Caco-2 (cell line): ENCODE measurements at regions of chr2 and their contacts with region 1.

Region 1: DNA sequence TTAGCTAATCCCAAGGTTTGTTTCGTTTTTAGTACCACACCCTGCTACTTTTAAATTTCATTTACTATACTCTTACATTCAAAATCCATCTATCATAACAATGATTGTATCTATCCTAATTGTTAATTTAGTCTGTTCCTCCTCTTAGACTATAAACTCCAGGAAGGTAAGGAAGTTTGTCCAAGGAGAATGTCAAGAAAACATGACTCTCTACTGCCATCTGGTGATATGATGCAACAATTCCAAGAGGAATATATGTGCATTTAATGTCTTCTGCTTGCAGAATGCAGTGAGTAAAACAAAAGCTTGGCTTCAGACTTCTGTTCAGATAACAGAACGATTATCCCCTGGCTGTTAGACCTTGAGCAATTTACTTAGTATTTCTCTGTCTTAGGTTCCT is 1267.1 kb downstream of the LRP1B start:
- DNase-seq: peak in 1 of 2 experiments; percentile 35
- H3K4me3 ChIP-seq: no peak overlapping the region
- H3K4me3 Mint-ChIP-seq: no peak overlapping the region
- H3K27ac Mint-ChIP-seq: no peak overlapping the region
- H3K4me1 ChIP-seq: no peaks in the 10 kb centered on the region
- H3K4me1 Mint-ChIP-seq: peaks cover 7% of the 10 kb centered on the region
- H3K27me3 ChIP-seq: no peaks in the 10 kb centered on the region
- H3K27me3 Mint-ChIP-seq: no peaks in the 10 kb centered on the region
- CTCF ChIP-seq: peak; percentile 56 to 68

Region 2: GRCh38 chr2:139790807-139791752 is 1072.6 kb before region 1 on chr2:
- CTCF ChIA-PET with region 1: no interaction called
- POLR2A ChIA-PET with region 1: no interaction called
- intact Hi-C with region 1: loop called (anchors 2 kb)
- DNase-seq: no peak
- H3K4me3 ChIP-seq: no peak overlapping the region
- H3K4me3 Mint-ChIP-seq: no peak overlapping the region
- H3K27ac Mint-ChIP-seq: no peak overlapping the region
- H3K4me1 ChIP-seq: no peaks in the 10 kb centered on the region
- H3K4me1 Mint-ChIP-seq: no peaks in the 10 kb centered on the region
- H3K27me3 ChIP-seq: no peaks in the 10 kb centered on the region
- H3K27me3 Mint-ChIP-seq: peaks cover 7% of the 10 kb centered on the region
- CTCF ChIP-seq: no peak

Region 3: DNA sequence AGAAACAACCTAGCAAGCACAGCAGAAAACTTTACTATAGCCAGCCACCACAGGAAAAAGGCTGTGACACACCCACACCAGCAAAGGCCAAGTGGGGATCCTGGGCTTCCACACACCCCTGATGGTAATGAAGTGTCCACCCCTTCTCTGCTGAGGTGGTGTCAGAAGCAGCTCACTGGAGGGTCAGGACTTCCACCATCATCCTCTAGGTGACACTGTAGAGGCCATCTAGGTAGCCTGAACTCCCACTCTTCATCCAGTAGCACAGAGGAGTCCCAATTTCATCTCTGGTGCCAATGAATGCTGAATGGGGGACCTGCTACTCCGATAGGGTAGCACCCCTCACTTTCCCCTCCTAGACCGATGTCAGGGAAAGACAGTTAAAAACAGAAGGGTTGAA is 277.3 kb before region 1 on chr2:
- CTCF ChIA-PET with region 1: no interaction called
- POLR2A ChIA-PET with region 1: no interaction called
- intact Hi-C with region 1: loop called (anchors 1 kb)
- DNase-seq: peak; percentile 41 to 57
- H3K4me3 ChIP-seq: no peak overlapping the region
- H3K4me3 Mint-ChIP-seq: no peak overlapping the region
- H3K27ac Mint-ChIP-seq: no peak overlapping the region
- H3K4me1 ChIP-seq: no peaks in the 10 kb centered on the region
- H3K4me1 Mint-ChIP-seq: no peaks in the 10 kb centered on the region
- H3K27me3 ChIP-seq: no peaks in the 10 kb centered on the region
- H3K27me3 Mint-ChIP-seq: peaks cover 8% of the 10 kb centered on the region
- CTCF ChIP-seq: peak; percentile 46 to 83

Region 4: DNA sequence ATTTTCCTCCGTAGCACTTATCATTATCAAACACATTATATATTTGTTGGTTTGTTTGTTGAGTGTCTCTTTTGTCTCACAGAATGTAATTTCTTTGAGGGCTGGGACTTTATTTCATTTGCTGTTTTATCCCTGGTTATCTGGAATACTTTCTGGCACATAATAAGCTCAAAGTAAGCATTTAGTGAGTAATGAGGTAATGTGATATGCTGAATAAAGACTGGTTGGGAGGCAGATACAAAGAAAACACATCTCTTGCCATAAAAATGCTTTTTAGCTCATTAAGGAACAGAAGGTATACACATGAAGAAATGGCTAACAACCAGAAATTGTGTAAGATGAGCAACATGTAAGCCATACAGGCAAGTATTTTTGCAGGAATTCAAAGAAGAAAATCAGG is 144.7 kb before region 1 on chr2:
- CTCF ChIA-PET with region 1: no interaction called
- POLR2A ChIA-PET with region 1: no interaction called
- intact Hi-C with region 1: loop called (anchors 5 kb)
- DNase-seq: no peak
- H3K4me3 ChIP-seq: no peak overlapping the region
- H3K4me3 Mint-ChIP-seq: no peak overlapping the region
- H3K27ac Mint-ChIP-seq: no peak overlapping the region
- H3K4me1 ChIP-seq: no peaks in the 10 kb centered on the region
- H3K4me1 Mint-ChIP-seq: no peaks in the 10 kb centered on the region
- H3K27me3 ChIP-seq: no peaks in the 10 kb centered on the region
- H3K27me3 Mint-ChIP-seq: peaks cover 10% of the 10 kb centered on the region
- CTCF ChIP-seq: no peak

Region 5: DNA sequence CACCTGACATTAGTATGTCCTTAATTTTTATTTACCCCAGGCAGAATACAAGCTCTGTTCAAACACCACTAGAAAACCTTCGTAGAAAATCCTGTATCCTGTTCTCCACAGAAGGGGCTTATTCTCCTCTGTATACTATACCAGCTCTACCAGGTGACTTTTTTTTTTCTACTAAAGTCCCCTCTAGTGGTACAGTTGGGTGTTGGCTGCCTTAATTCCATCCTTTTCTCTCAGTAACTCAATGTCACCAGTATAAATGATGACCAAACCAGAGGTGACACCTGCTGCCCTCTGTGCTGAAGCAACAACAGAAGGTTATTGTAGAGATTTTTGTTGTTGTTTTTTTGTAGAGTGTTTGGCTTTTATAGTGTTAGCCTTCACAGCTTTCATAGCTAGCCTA is 54.9 kb before region 1 on chr2:
- CTCF ChIA-PET with region 1: no interaction called
- POLR2A ChIA-PET with region 1: no interaction called
- intact Hi-C with region 1: loop called (anchors 5 kb)
- DNase-seq: peak in 1 of 2 experiments; percentile 6
- H3K4me3 ChIP-seq: no peak overlapping the region
- H3K4me3 Mint-ChIP-seq: no peak overlapping the region
- H3K27ac Mint-ChIP-seq: no peak overlapping the region
- H3K4me1 ChIP-seq: no peaks in the 10 kb centered on the region
- H3K4me1 Mint-ChIP-seq: no peaks in the 10 kb centered on the region
- H3K27me3 ChIP-seq: no peaks in the 10 kb centered on the region
- H3K27me3 Mint-ChIP-seq: peaks cover 4% of the 10 kb centered on the region
- CTCF ChIP-seq: no peak

Region 6: GRCh38 chr2:140905083-140905781 is 41.5 kb after region 1 on chr2:
- CTCF ChIA-PET with region 1: no interaction called
- POLR2A ChIA-PET with region 1: no interaction called
- intact Hi-C with region 1: no loop called
- DNase-seq: no peak
- H3K4me3 ChIP-seq: no peak overlapping the region
- H3K4me3 Mint-ChIP-seq: no peak overlapping the region
- H3K27ac Mint-ChIP-seq: no peak overlapping the region
- H3K4me1 ChIP-seq: no peaks in the 10 kb centered on the region
- H3K4me1 Mint-ChIP-seq: no peaks in the 10 kb centered on the region
- H3K27me3 ChIP-seq: no peaks in the 10 kb centered on the region
- H3K27me3 Mint-ChIP-seq: no peaks in the 10 kb centered on the region
- CTCF ChIP-seq: no peak